HEK293 (cell line): ENCODE measurements at regions of chr17 and their contacts with region 1.

Region 1: DNA sequence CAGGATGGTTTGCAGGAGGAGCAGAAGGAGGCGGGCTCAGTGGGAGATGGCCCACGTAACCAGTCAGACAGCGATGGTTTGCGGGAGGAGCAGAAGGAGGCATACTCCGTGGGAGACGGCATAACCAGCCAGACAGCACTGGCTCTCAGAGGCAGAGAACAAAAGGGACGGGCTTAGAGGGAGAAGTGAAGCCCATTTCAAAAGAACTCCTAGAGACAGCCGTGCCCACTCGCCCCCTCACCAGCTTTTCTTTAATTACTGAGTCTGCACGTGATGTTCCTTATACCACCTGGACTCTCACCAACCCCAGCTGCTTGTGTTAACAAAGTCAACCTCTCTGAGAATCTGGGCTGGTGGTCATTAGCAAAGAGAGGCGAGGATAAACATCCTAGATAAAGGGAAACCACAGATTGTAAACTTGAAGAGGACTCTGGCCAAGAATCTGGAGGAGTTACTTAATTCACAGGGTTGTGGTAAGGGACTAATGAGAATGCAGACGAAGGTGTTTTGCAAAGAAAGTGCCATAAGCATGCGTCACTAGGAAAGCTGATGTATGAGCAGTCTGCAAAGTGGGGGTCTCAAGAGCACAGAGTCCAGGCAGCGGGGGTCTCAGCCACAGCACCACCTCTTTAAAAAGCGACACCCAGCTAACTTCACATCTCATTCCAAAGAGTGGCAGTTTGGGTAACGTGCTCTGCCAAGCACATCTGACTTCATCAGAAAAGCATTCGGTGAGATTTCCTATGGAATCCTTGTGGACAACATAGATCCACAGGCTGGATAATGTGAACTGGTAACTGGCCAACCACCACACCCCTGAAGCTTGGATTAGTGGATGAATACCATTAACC is 51.7 kb downstream of the NXN start:
- H3K4me3 ChIP-seq: peak overlapping the region; percentile 22
- H3K27ac ChIP-seq: peak overlapping the region; percentile 63
- H3K4me1 ChIP-seq: peaks cover 12% of the 10 kb centered on the region
- CTCF ChIP-seq: no peak

Region 2: GRCh38 chr17:879549-880442 is 48.0 kb before region 1 on chr17:
- CTCF ChIA-PET with region 1: interaction called, 11 read pairs
- POLR2A ChIA-PET with region 1: interaction called, 11 read pairs
- H3K4me3 ChIP-seq: no peak overlapping the region
- H3K27ac ChIP-seq: no peak overlapping the region
- H3K4me1 ChIP-seq: peaks cover 17% of the 10 kb centered on the region
- CTCF ChIP-seq: peak; percentile 64

Region 3: GRCh38 chr17:951325-952132 is 23.7 kb after region 1 on chr17:
- CTCF ChIA-PET with region 1: interaction called, 6 read pairs
- POLR2A ChIA-PET with region 1: interaction called, 15 read pairs
- H3K4me3 ChIP-seq: peak overlapping the region; percentile 24
- H3K27ac ChIP-seq: 0 out of 2 replicates have a peak overlapping the region, but pooled peaks have one; percentile 11
- H3K4me1 ChIP-seq: peaks cover 14% of the 10 kb centered on the region
- CTCF ChIP-seq: no peak

Region 4: GRCh38 chr17:956905-957304 is 29.1 kb after region 1 on chr17:
- CTCF ChIA-PET with region 1: interaction called, 6 read pairs
- POLR2A ChIA-PET with region 1: interaction called, 15 read pairs
- H3K4me3 ChIP-seq: no peak overlapping the region
- H3K27ac ChIP-seq: no peak overlapping the region
- H3K4me1 ChIP-seq: peaks cover 11% of the 10 kb centered on the region
- CTCF ChIP-seq: no peak

Region 5: GRCh38 chr17:964876-965275 is 37.0 kb after region 1 on chr17:
- CTCF ChIA-PET with region 1: no interaction called
- POLR2A ChIA-PET with region 1: interaction called, 11 read pairs
- H3K4me3 ChIP-seq: no peak overlapping the region
- H3K27ac ChIP-seq: peak overlapping the region; percentile 35
- H3K4me1 ChIP-seq: peaks cover 30% of the 10 kb centered on the region
- CTCF ChIP-seq: no peak